BJ (cell line): ENCODE measurements at regions of chr1 and their contacts with region 1.

Region 1: GRCh38 chr1:39507230-39507928 is 15.9 kb downstream of the BMP8A start:
- DNase-seq: no peak
- H3K4me3 ChIP-seq: no peak overlapping the region
- H3K27me3 ChIP-seq: no peaks in the 10 kb centered on the region
- CTCF ChIP-seq: peak; percentile 33; the same call in 1 of the 2 replicates

Region 2: DNA sequence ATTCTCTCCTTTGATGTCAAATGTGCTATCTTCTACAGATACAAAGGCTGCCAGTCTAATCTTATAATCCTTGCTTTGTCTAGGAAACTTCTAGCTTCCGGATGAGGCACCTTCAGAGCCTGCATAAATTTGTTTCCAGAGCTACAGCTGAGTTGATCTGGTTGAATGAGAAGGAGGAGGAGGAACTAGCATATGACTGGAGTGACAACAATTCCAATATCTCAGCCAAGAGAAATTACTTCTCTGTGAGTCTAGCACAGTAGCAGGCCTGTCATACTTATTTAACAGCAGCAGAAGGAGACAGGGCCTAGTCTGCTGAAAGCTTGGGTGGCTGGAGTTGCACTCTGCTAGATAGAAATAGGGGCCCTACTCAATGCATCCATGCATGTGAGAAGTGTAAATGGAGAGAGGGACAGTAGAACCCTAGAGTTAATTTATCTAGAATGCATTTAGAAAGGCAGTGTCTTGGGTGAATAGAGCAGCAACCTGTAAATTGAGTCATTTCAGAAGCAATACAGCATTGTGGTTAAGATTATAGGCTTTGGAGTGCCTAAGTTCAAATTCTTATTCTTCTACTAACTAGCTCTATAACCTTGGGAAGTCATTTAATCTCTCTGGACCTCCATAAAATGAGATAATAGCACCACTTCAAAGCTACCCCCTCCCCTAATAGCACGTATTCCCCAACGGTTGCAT is 213.9 kb before region 1 on chr1:
- CTCF ChIA-PET with region 1: no interaction called
- POLR2A ChIA-PET with region 1: no interaction called
- DNase-seq: no peak
- H3K4me3 ChIP-seq: no peak overlapping the region
- H3K27me3 ChIP-seq: no peaks in the 10 kb centered on the region
- CTCF ChIP-seq: no peak

Region 3: GRCh38 chr1:39574646-39575045 is 67.3 kb after region 1 on chr1:
- CTCF ChIA-PET with region 1: no interaction called
- POLR2A ChIA-PET with region 1: interaction called, 12 read pairs
- DNase-seq: no peak
- H3K4me3 ChIP-seq: peak overlapping the region; percentile 84
- H3K27me3 ChIP-seq: no peaks in the 10 kb centered on the region
- CTCF ChIP-seq: no peak